ENCODE measurements at regions of chr7 and their contacts with region 1.

Region 1: DNA sequence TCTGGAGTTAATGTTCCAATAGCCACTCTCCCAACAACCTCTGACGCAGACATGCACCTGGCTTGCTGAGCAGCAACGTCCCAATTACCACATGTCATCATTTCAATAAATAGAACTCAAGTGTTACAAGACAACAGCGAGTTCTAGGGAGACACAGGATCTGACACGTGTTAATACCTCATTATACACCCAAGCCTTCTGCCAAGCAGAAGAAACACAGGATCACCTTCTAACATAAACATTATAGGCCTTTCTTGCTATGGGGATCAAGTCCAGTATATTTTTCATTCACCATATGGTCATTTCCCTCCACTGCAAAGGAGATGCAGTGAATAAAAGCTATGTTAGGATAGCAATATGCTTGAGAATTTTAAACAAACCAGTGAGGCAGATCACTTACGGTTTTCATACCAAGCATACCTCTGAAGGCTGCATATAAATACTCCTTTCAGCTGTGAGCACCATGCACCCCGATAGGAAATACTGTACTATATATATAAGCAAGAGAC is 74.2 kb downstream of the JAZF1 start:
- DNase-seq: peak; percentile 28 to 69
- ATAC-seq: peak; percentile 85 to 90 (median 88)
- H3K4me3 ChIP-seq: peak overlapping the region; percentile 43
- H3K27ac ChIP-seq: peak overlapping the region; percentile 82
- H3K4me1 ChIP-seq: peaks cover 59% of the 10 kb centered on the region
- H3K27me3 ChIP-seq: no peaks in the 10 kb centered on the region
- CTCF ChIP-seq: no peak

Region 2: GRCh38 chr7:28179120-28180030 is 73.0 kb after region 1 on chr7:
- intact Hi-C with region 1: loop called in 1 of 2 experiments (anchors 5 kb)
- DNase-seq: peak; percentile 82 to 86
- ATAC-seq: peak; percentile 72 to 86 (median 80)
- H3K4me3 ChIP-seq: peak overlapping the region; percentile 79
- H3K27ac ChIP-seq: peak overlapping the region; percentile 72
- H3K4me1 ChIP-seq: peaks cover 16% of the 10 kb centered on the region
- H3K27me3 ChIP-seq: no peaks in the 10 kb centered on the region
- CTCF ChIP-seq: no peak

Measured in psoas muscle (tissue), 8 donors.